CD4-positive, alpha-beta T cell (primary cell): ENCODE measurements at regions of chr2 and their contacts with region 1.

Region 1: DNA sequence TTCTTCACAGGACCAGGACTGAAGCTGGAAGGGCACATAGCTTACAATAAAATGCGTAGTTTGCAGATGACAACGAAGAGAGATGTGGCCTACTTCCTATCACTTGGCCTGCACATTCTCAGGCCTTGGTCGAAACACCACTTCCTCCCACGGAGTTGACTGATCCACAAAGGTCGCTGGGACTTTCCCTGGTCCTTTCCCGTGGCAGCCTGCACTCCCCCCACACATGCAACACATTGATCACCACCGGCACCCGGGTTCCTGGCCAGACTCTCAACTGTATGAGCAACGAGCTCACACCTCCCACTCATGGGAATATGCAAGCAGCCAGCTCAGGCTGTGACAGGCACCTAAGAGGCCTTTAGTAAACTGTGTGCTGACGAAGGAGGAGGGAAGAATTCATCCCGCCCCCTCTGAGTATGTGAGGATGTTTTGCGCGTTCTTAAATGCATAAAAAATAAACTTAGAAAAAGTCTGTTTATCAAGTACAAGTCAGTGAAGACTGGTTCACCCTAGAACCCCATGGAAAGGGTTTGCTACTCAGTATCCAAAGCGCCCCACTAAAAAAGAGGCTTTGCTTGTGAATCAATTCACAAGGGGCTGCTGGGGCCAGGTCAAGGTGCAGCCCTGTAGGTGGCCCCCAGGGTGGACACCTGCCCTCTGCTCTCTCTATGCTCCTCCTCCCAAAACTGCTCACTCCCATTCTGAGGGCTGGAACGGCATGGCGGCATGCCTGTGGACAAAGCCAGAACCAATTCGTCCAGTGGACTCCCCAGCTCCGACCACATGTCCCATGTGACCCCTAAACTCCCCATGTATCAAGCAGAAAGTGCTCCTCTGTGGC is 154.3 kb downstream of the EIPR1 start:
- DNase-seq: peak in 13 of 14 experiments; percentile 14 to 93 (median 56)
- ATAC-seq: peak; percentile 70
- H3K4me3 ChIP-seq: no peak overlapping the region
- H3K4me3 Mint-ChIP-seq: no peak overlapping the region
- H3K27ac ChIP-seq: peak overlapping the region; percentile 52 to 92
- H3K27ac Mint-ChIP-seq: peak overlapping the region; percentile 92
- H3K4me1 ChIP-seq: peaks cover 31% of the 10 kb centered on the region
- H3K4me1 Mint-ChIP-seq: peaks cover 38% of the 10 kb centered on the region
- H3K27me3 ChIP-seq: no peaks in the 10 kb centered on the region
- H3K27me3 Mint-ChIP-seq: no peaks in the 10 kb centered on the region
- CTCF ChIP-seq: no peak

Region 2: GRCh38 chr2:2573658-2574293 is 649.5 kb before region 1 on chr2:
- CTCF ChIA-PET with region 1: no interaction called
- POLR2A ChIA-PET with region 1: no interaction called
- intact Hi-C with region 1: no loop called
- DNase-seq: no peak
- ATAC-seq: no peak
- H3K4me3 ChIP-seq: no peak overlapping the region
- H3K4me3 Mint-ChIP-seq: no peak overlapping the region
- H3K27ac ChIP-seq: no peak overlapping the region
- H3K27ac Mint-ChIP-seq: no peak overlapping the region
- H3K4me1 ChIP-seq: no peaks in the 10 kb centered on the region
- H3K4me1 Mint-ChIP-seq: no peaks in the 10 kb centered on the region
- H3K27me3 ChIP-seq: no peaks in the 10 kb centered on the region
- H3K27me3 Mint-ChIP-seq: no peaks in the 10 kb centered on the region
- CTCF ChIP-seq: no peak

Region 3: GRCh38 chr2:3242747-3243369 is 19.6 kb after region 1 on chr2:
- CTCF ChIA-PET with region 1: no interaction called
- POLR2A ChIA-PET with region 1: interaction called, 11 read pairs
- intact Hi-C with region 1: loop called in 1 of 2 experiments (anchors 2 kb)
- DNase-seq: peak in 12 of 14 experiments; percentile 9 to 84 (median 32)
- ATAC-seq: peak; percentile 89
- H3K4me3 ChIP-seq: peak overlapping the region; percentile 14
- H3K4me3 Mint-ChIP-seq: peak overlapping the region; percentile 78
- H3K27ac ChIP-seq: peak overlapping the region; percentile 47 to 64
- H3K27ac Mint-ChIP-seq: no peak overlapping the region
- H3K4me1 ChIP-seq: peaks cover 52% of the 10 kb centered on the region
- H3K4me1 Mint-ChIP-seq: peaks cover 13% of the 10 kb centered on the region
- H3K27me3 ChIP-seq: no peaks in the 10 kb centered on the region
- H3K27me3 Mint-ChIP-seq: no peaks in the 10 kb centered on the region
- CTCF ChIP-seq: no peak